Activated CD4-positive, alpha-beta T cell treated with anti-CD3 and anti-CD28 coated beads, Interleukin-2, amount 10 ng/mL, durations not matched to agents 24 days and 14 days (primary cell): ENCODE measurements at regions of chr15 and their contacts with region 1.

Region 1: GRCh38 chr15:78131295-78132061 is at the start of gene CIB2:
- DNase-seq: peak; percentile 96
- H3K4me3 Mint-ChIP-seq: peak within 1 kb of the TSS; percentile 84
- H3K27ac Mint-ChIP-seq: peak within 1 kb of the TSS; percentile 87
- H3K4me1 Mint-ChIP-seq: peaks cover 28% of the 10 kb centered on the region
- H3K27me3 Mint-ChIP-seq: no peaks in the 10 kb centered on the region
- total RNA-seq, gene CIB2: 1.2 and 1.5 TPM in 2 replicates

Region 2: DNA sequence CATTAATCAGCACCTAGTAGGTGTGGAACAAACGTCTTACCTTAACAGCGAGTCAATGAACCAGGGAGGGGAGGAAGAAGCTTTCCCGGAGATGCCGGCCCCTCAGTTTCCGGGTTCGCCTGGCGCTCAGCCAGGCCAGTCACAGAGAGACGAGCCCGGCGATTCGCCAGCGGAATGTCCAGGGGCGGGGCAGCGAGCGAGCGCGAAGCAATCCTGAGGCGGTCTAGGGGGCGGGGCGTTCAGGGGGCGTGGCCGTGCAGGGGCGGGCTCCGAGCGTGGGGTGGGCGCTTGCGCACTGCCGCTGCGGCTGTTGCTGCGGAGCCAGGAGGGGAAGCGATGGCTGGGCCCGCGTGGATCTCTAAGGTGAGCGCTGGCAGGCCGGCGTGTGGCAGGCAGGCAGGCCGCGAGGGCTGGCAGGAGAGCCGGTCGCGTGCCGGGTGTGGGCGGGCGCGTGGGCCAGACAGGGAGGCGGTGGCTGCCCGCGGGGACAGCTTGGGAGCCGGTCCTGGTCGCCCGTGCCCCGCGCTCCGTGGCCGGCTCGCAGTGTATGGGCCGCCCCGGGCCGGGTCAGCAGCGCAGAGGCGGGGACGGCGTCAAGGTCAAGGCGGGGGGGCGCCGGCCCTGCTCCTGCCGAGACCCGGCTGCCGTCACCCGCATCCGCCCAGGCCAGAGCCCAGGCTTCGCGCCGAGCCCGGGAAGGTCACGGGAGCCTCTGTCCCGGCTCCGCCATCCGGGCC is 17.8 kb after region 1 on chr15 and contains the start of gene IDH3A:
- intact Hi-C with region 1: loop called (anchors 1 kb)
- DNase-seq: peak; percentile 100
- H3K4me3 Mint-ChIP-seq: peak within 1 kb of the TSS; percentile 98
- H3K27ac Mint-ChIP-seq: peak within 1 kb of the TSS; percentile 93
- H3K4me1 Mint-ChIP-seq: peaks cover 38% of the 10 kb centered on the region
- H3K27me3 Mint-ChIP-seq: no peaks in the 10 kb centered on the region
- total RNA-seq, gene IDH3A: 165 and 169 TPM in 2 replicates

Region 3: DNA sequence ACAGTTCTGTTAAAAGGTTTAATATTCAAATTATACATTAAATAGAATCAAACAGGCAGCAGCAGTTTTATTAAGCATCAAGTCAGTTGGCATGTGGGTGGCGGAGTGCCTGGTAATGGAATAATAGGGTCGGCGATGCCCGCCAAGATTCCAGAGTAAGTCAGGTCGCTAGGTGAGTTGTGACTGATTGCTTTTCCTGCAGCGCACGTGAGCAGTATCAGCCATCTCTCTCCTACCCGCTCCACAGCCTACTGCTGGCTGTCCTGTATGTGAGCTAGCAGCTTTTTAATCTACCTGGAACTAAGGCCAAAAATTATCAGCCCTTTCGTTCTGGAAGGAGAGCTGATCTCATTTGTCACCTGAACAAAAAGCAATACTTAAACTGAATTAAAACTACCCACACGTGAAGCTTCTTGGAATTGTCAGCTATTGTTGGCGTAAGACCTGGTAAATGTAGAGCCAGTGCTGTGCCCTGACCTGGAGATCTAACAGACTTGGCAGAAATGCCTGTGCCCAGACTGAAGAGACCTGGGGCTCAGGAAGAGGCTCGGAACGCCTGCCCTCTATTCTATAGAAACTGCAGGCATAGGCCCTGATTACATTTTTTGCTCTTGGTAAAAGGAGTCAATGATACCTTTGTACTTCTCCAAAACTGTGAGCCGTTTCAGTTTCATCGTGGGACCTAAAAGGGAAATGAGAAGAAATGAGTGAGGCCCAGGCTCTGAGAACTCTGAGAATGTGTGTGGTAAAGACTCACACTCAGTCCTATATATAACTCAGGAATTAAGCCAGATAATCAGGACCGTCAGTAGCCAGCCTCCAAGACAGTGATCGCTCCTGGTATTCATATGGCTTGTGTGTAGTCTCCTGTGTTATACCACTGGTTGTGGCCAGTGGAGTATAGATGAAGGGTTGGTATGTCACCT is 39.6 kb after region 1 on chr15:
- intact Hi-C with region 1: loop called (anchors 5 kb)
- DNase-seq: peak; percentile 55
- H3K4me3 Mint-ChIP-seq: no peak overlapping the region
- H3K27ac Mint-ChIP-seq: no peak overlapping the region
- H3K4me1 Mint-ChIP-seq: peaks cover 57% of the 10 kb centered on the region
- H3K27me3 Mint-ChIP-seq: no peaks in the 10 kb centered on the region

Region 4: GRCh38 chr15:78195735-78196201 is 64.3 kb after region 1 on chr15:
- intact Hi-C with region 1: loop called (anchors 1 kb)
- DNase-seq: peak; percentile 85
- H3K4me3 Mint-ChIP-seq: no peak overlapping the region
- H3K27ac Mint-ChIP-seq: no peak overlapping the region
- H3K4me1 Mint-ChIP-seq: peaks cover 3% of the 10 kb centered on the region
- H3K27me3 Mint-ChIP-seq: peaks cover 9% of the 10 kb centered on the region

Region 5: GRCh38 chr15:78241007-78241406 is 109.5 kb after region 1 on chr15:
- intact Hi-C with region 1: loop called (anchors 5 kb)
- DNase-seq: peak; percentile 94
- H3K4me3 Mint-ChIP-seq: no peak overlapping the region
- H3K27ac Mint-ChIP-seq: no peak overlapping the region
- H3K4me1 Mint-ChIP-seq: peaks cover 3% of the 10 kb centered on the region
- H3K27me3 Mint-ChIP-seq: peaks cover 5% of the 10 kb centered on the region

Region 6: GRCh38 chr15:78638658-78639314 is 507.3 kb after region 1 on chr15:
- intact Hi-C with region 1: no loop called
- DNase-seq: peak; percentile 80
- H3K4me3 Mint-ChIP-seq: no peak overlapping the region
- H3K27ac Mint-ChIP-seq: no peak overlapping the region
- H3K4me1 Mint-ChIP-seq: peaks cover 7% of the 10 kb centered on the region
- H3K27me3 Mint-ChIP-seq: peaks cover 21% of the 10 kb centered on the region